ENCODE measurements at regions of chr2 and their contacts with region 1.

Region 1: GRCh38 chr2:171433763-171434670 is at the starts of genes DCAF17 and METTL8:
- DNase-seq: peak; percentile 94
- ATAC-seq: peak; percentile 93
- H3K4me3 Mint-ChIP-seq: peak within 1 kb of the TSS; percentile 89
- H3K27ac Mint-ChIP-seq: peak within 1 kb of the TSS; percentile 88
- H3K4me1 Mint-ChIP-seq: peaks cover 31% of the 10 kb centered on the region
- H3K27me3 Mint-ChIP-seq: no peaks in the 10 kb centered on the region
- total RNA-seq, gene DCAF17: 17.5 to 17.7 TPM
- total RNA-seq, gene METTL8: 20.9 to 22.9 TPM

Region 2: DNA sequence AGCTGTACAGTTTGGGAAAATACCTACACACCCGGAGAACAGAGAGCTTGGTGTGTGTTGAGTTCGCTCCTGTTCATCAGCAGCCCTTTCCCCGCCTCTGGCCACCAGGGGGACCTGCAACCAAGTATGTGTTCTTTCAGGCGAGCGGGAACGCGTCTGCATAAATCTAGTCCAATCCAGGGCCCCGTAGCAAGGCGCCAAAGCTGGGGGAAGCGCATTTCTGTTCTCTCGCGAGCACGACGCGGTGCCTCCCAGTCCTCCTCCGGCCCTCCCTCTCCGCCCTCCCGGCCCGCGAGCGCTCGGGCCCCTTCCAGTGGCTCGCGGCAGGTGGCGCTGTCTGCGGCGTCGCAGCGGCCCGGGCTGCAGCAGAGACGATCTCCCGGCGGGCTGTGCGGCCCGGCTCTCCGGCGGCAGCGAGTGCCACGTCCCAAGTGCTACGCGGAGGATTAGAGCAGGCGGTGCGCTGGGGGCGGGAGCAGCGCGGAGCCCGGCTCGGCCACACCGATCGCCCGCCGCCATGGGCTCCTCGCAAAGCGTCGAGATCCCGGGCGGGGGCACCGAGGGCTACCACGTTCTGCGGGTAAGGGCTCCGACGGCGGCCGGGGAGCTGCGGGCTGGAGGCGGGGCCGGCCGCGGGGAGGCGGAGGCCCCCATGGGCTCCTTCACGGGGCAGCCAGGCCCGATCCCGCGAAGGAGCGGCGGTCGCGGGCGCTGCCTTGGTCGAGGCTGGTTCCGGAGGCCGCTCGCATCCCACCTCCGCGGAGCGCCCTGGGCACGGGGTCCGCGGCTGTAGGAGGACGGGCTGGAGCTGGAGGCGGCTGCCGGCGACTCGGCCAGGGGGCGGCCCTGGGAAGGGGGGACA is 505.0 kb before region 1 on chr2 and contains the start of gene GORASP2:
- POLR2A ChIA-PET with region 1: interaction called, 12 read pairs
- DNase-seq: peak; percentile 99
- ATAC-seq: peak; percentile 93
- H3K4me3 Mint-ChIP-seq: peak within 1 kb of the TSS; percentile 95
- H3K27ac Mint-ChIP-seq: peak within 1 kb of the TSS; percentile 97
- H3K4me1 Mint-ChIP-seq: peaks cover 34% of the 10 kb centered on the region
- H3K27me3 Mint-ChIP-seq: no peaks in the 10 kb centered on the region
- total RNA-seq, gene GORASP2: 61.2 to 62.7 TPM

Region 3: GRCh38 chr2:171541202-171541887 is 107.3 kb after region 1 on chr2:
- POLR2A ChIA-PET with region 1: no interaction called
- DNase-seq: no peak
- ATAC-seq: no peak
- H3K4me3 Mint-ChIP-seq: no peak overlapping the region
- H3K27ac Mint-ChIP-seq: no peak overlapping the region
- H3K4me1 Mint-ChIP-seq: no peaks in the 10 kb centered on the region
- H3K27me3 Mint-ChIP-seq: peaks cover 19% of the 10 kb centered on the region